ENCODE measurements at regions of chr5 and their contacts with region 1.

Region 1: GRCh38 chr5:135944967-135945560 is 9.7 kb downstream of the LECT2 start:
- DNase-seq: peak in 1 of 2 donors; percentile 65
- H3K4me3 ChIP-seq: no peak overlapping the region
- H3K27ac ChIP-seq: no peak overlapping the region
- H3K4me1 ChIP-seq: no peaks in the 10 kb centered on the region
- H3K27me3 ChIP-seq: no peaks in the 10 kb centered on the region
- CTCF ChIP-seq: peak; percentile 73 to 85

Region 2: GRCh38 chr5:135977375-135977928 is 32.4 kb after region 1 on chr5:
- intact Hi-C with region 1: no loop called
- DNase-seq: peak; percentile 68 to 86
- H3K4me3 ChIP-seq: no peak overlapping the region
- H3K27ac ChIP-seq: no peak overlapping the region
- H3K4me1 ChIP-seq: peaks cover 0 to 30% (median 13%) of the 10 kb centered on the region in 4 donors
- H3K27me3 ChIP-seq: no peaks in the 10 kb centered on the region
- CTCF ChIP-seq: peak; percentile 23 to 29

Region 3: DNA sequence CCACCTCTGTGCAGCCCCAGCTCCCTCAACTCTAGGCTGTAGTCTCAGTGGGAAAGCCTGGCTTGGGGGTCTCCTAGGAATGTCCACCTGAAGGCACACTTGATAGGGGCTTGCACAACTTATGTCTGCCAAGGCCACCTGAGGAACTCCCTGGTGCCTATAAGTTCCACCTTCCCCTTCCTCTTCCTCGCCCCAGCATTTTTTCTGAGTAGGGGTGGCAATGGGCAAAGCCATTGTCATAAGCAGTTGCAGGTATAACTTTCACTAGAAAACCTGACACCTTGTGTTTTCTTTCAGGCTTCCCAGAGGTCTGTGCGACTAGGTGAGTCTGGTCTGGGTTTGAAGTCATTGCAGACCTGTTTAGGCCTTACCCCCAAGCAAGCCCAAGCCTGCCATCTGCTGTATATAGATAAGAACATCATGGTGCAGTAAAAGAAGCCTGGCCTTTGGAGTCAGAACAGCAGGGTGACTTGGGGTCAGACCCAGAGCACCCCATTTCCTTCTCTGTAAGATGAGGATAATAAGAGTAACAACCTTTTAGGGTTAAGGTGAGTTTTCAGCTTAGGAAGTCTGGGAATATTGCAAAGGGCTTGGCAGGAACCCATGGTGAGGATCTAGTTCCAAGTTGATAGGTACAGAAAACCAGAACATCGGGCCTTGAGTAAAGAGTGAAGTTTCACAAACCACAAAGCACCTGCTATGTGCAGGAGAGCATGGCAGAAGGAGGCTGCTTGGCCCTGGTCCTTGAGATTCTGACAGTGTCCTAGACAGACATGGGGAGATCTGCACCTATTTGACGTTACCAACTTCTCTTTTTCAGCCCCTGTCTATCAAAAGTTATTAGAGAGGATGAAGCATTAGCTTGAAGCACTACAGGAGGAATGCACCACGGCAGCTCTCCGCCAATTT is 117.6 kb after region 1 on chr5:
- intact Hi-C with region 1: loop called (anchors 2 kb)
- DNase-seq: no peak
- H3K4me3 ChIP-seq: no peak overlapping the region
- H3K27ac ChIP-seq: no peak overlapping the region
- H3K4me1 ChIP-seq: peaks cover 0 to 35% (median 14%) of the 10 kb centered on the region in 4 donors
- H3K27me3 ChIP-seq: no peaks in the 10 kb centered on the region
- CTCF ChIP-seq: peak; percentile 46 to 47

Region 4: DNA sequence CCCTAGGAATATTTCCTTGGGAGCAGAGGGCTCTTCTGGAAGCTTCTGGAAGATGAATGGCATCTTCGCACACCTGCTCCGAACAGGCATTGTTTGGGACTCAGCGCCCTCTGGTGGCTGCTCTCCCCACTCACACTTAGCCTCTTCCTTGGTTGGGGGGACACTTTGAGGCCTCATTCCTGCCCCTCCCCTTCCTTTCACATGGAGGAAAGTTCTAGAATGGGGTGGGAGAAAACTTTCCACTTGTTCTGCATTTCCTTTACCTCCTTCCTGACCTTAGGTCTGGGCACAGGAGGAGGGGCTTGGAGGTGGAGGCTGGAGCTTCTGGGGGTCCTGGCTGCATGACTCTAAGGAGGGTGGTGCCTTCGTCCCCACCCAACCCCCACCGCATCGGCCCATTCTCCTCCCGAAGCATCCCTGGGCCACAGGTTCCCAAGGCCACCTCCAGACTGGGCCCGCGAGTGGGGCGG is 267.2 kb after region 1 on chr5:
- intact Hi-C with region 1: loop called (anchors 5 kb)
- DNase-seq: peak in 1 of 2 donors; percentile 50
- H3K4me3 ChIP-seq: no peak overlapping the region
- H3K27ac ChIP-seq: no peak overlapping the region
- H3K4me1 ChIP-seq: no peaks in the 10 kb centered on the region
- H3K27me3 ChIP-seq: peaks cover 0 to 18% of the 10 kb centered on the region in 2 donors
- CTCF ChIP-seq: peak; percentile 81 to 83

Measured in tibial artery (tissue), 4 donors.